MCF 10A (cell line): ENCODE measurements at regions of chr1 and their contacts with region 1.

Region 1: DNA sequence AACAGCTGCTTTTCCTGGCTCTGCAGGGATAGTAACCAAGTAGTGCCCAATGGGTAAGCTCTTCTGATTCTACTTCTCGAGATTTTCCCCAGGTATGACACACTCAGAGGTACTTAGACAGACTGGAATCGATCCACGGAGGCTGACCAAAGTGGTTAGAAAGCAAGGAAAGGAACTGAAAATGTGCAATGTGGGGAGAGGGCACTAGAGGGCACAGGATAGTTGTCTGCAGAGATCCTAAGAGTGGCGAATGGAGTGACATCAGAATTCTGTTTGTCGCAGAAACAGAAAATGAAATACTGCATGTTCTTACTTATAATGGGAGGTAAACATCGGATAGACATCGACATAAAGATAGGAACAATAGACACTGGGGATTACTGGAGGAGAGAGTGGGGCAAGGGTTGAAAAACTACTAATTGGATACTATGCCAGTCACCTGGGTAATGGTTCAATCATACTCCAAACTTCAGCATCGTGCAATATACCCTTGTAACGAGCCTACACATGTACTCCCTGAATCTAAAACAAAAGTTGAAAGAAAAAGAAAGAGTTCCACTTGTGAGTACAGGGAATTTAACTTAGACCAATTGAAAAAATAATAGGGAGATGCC is 23.3 kb downstream of the CYP2J2 start:
- DNase-seq: peak; percentile 44
- H3K4me3 Mint-ChIP-seq: no peak overlapping the region
- H3K27ac Mint-ChIP-seq: no peak overlapping the region
- H3K4me1 Mint-ChIP-seq: peaks cover 6% of the 10 kb centered on the region
- H3K27me3 Mint-ChIP-seq: peaks cover 13% of the 10 kb centered on the region
- CTCF ChIP-seq: peak; percentile 45

Region 2: GRCh38 chr1:59653968-59654367 is 249.3 kb before region 1 on chr1:
- CTCF ChIA-PET with region 1: no interaction called
- POLR2A ChIA-PET with region 1: no interaction called
- intact Hi-C with region 1: no loop called
- DNase-seq: no peak
- H3K4me3 Mint-ChIP-seq: no peak overlapping the region
- H3K27ac Mint-ChIP-seq: no peak overlapping the region
- H3K4me1 Mint-ChIP-seq: no peaks in the 10 kb centered on the region
- H3K27me3 Mint-ChIP-seq: no peaks in the 10 kb centered on the region
- CTCF ChIP-seq: no peak

Region 3: DNA sequence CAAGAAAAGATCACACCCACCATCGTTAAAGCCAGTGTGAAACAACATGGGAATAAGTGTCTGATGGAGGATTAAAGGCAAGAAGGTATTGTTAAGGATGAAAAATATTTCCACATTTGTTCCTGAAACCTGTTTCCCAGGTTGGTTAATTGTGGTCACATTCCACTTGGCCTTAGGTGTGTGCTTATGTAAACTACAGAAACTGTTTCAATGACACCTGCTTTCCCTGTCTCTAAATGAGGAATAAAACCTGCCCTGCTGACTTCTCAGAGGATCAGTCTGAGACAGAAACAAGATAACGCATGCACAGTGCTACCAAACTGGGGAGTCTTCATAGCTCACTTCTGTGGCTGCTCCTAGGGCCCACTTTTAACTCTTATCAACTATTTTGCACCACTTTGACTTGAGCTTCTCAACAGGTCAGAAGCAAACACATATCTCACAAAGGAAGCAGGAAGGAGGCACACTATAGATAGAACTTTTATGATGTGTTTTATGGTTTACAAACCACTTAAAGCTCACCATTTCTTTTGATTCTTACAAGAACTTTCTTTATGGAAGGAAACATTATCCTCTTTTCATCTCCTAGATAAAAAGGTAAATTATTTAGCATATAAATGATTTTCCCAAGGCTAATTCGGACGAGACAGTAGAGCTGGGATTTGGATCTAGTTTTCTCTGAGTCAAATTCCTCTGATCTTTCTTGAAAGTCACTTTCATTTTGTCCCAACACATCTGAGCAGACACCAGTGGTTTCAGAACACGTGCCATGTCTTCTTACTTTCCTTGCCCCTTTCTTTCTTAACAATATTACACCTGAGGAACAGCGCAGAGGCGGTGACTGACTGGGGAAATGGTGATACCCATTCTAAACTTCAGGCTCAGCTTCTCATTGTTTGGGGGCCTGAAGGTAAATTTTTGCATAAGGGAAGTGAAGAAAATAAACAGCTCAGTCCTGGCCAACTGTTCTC is 10.1 kb before region 1 on chr1:
- CTCF ChIA-PET with region 1: interaction called, 11 read pairs
- POLR2A ChIA-PET with region 1: interaction called, 3 read pairs
- intact Hi-C with region 1: no loop called
- DNase-seq: no peak
- H3K4me3 Mint-ChIP-seq: no peak overlapping the region
- H3K27ac Mint-ChIP-seq: no peak overlapping the region
- H3K4me1 Mint-ChIP-seq: no peaks in the 10 kb centered on the region
- H3K27me3 Mint-ChIP-seq: no peaks in the 10 kb centered on the region
- CTCF ChIP-seq: no peak

Region 4: GRCh38 chr1:59926381-59927123 is 23.3 kb after region 1 on chr1 and contains the start of gene CYP2J2:
- CTCF ChIA-PET with region 1: interaction called, 13 read pairs
- POLR2A ChIA-PET with region 1: no interaction called
- intact Hi-C with region 1: no loop called
- DNase-seq: peak; percentile 59
- H3K4me3 Mint-ChIP-seq: peak within 1 kb of the TSS; percentile 71
- H3K27ac Mint-ChIP-seq: no peak within 1 kb of the TSS
- H3K4me1 Mint-ChIP-seq: no peaks in the 10 kb centered on the region
- H3K27me3 Mint-ChIP-seq: peaks cover 57% of the 10 kb centered on the region
- CTCF ChIP-seq: no peak
- total RNA-seq, gene CYP2J2: 0.25 and 0.42 TPM in 2 replicates